ENCODE measurements at regions of chr12 and their contacts with region 1.

Region 1: GRCh38 chr12:94101738-94102660 is 46.4 kb upstream of the PLXNC1 start:
- DNase-seq: no peak
- H3K4me3 ChIP-seq: peak overlapping the region; percentile 68
- CTCF ChIP-seq: peak; percentile 86

Region 2: DNA sequence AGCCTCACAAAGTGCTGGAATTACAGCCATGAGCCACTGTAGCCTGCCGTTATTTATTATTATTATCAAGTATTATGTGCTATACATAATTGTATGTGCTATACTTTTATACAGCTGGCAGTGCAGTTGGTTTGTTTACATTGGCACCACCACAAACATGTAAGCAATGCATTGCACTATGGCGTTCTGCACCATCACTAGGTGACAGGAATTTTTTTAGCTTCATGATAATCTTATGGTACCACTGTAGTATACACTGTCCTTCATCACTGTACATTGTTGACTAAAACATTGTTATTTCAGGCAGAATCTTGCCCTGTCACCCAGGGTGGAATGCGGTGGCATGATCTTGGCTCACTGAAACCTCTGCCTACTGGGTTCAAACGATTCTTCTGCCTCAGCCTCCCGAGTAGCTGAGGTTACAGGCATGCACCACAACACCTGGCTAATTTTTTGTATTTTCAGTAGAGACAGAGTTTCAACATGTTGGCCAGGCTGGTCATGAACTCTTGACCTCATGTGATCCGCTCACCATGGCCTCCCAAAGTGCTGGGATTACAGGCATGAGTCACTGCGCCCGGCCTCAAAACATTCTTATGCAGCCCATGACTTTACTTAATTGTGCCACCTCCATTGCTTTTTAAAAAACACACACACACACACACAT is 617.6 kb before region 1 on chr12:
- CTCF ChIA-PET with region 1: interaction called, 11 read pairs
- POLR2A ChIA-PET with region 1: no interaction called
- DNase-seq: no peak
- H3K4me3 ChIP-seq: no peak overlapping the region
- CTCF ChIP-seq: no peak

Region 3: GRCh38 chr12:93582116-93582772 is 519.8 kb before region 1 on chr12:
- CTCF ChIA-PET with region 1: interaction called, 199 read pairs
- POLR2A ChIA-PET with region 1: no interaction called
- DNase-seq: no peak
- H3K4me3 ChIP-seq: no peak overlapping the region
- CTCF ChIP-seq: no peak

Region 4: DNA sequence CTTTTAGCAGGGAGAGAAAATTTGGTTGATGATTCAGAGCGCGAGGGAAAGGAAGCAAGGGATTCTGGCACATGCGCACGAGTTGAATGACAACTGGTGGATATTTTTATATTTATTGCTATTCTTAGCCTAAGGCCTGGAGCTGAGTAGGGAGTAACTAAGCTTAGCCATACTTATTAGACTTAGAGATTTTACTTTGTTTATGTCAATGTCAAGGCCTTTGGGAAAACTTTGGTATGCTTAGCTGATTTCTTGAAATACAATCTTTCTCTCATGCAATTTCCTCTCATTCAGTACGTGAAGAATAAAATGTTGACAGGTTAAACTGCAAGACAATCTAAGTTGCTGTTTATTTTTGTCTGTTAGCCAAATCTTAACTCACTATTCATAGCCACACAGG is 323.7 kb before region 1 on chr12:
- CTCF ChIA-PET with region 1: interaction called, 40 read pairs
- POLR2A ChIA-PET with region 1: no interaction called
- DNase-seq: no peak
- H3K4me3 ChIP-seq: no peak overlapping the region
- CTCF ChIP-seq: no peak

Region 5: GRCh38 chr12:93886533-93887511 is 215.2 kb before region 1 on chr12:
- CTCF ChIA-PET with region 1: interaction called, 47 read pairs
- POLR2A ChIA-PET with region 1: interaction called, 3 read pairs
- DNase-seq: peak; percentile 87
- H3K4me3 ChIP-seq: no peak overlapping the region
- CTCF ChIP-seq: no peak

Region 6: GRCh38 chr12:94074980-94075928 is 26.7 kb before region 1 on chr12:
- CTCF ChIA-PET with region 1: interaction called, 55 read pairs
- POLR2A ChIA-PET with region 1: no interaction called
- DNase-seq: peak; percentile 72
- H3K4me3 ChIP-seq: no peak overlapping the region
- CTCF ChIP-seq: peak; percentile 64

Region 7: DNA sequence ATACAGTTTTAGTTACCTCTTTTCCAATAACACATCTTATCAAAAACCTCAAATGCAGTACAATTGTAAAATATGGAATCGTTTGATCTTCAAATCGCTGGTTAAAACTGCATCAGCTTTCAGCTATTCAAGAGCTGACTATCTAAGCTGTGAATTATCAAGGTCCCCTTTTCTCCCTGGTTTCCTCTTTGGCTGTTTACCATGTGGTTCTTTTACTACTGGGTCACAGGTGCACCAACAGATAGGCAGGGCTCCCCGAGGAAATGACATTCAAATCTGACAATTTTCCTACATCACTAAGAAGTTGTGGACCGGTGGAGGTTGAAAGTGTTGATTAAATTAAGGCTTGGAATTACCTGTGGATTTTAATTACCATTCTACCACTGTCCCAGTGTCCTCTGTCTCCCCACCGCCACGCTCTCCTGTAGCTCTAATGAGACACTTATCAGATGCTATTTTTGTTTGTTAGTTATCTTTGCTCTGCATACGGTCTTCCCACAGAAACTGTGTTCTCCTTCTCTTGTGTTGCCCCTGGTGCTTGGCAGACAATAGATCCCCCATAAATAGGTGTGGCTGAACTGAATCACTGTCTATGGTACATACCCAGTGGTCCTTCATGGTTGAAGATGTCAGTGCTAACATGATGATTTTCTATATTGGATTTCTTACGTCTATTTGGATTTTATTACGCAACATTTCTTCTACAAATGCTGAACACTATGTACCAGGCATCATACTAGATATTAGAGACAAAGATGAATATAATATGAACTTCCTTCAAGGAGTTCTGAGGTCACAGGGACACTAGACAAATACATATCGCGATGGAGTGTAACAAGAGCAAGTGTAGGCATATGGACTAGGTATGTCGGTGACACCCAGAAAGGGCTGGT is 25.5 kb after region 1 on chr12:
- CTCF ChIA-PET with region 1: no interaction called
- POLR2A ChIA-PET with region 1: no interaction called
- DNase-seq: no peak
- H3K4me3 ChIP-seq: no peak overlapping the region
- CTCF ChIP-seq: no peak

Region 8: DNA sequence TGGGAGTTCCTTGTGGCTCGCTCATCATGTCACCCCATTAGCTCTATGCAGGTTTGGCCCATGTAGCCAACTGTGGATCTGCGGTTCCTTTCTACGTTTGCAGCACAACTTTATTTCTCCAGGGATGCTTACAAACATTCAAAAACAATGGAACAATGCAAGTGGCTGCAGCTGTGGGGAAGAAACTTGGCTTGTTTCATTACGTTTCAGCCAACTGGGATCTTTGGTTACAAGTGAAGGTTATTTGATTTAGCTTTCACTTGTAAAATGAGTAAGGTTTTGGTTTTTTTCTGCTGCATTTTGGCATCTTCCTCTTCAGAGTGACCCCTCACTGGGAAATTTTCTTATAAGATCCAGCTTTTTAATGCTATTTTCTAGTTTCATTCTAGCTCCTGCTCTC is 152.3 kb after region 1 on chr12:
- CTCF ChIA-PET with region 1: no interaction called
- POLR2A ChIA-PET with region 1: no interaction called
- DNase-seq: no peak
- H3K4me3 ChIP-seq: no peak overlapping the region
- CTCF ChIP-seq: no peak

Region 9: GRCh38 chr12:94326727-94327126 is 224.7 kb after region 1 on chr12:
- CTCF ChIA-PET with region 1: no interaction called
- POLR2A ChIA-PET with region 1: no interaction called
- DNase-seq: peak; percentile 60
- H3K4me3 ChIP-seq: no peak overlapping the region
- CTCF ChIP-seq: no peak

Measured in AG04449 (cell line).